ENCODE measurements at regions of chr1 and their contacts with region 1.

Region 1: DNA sequence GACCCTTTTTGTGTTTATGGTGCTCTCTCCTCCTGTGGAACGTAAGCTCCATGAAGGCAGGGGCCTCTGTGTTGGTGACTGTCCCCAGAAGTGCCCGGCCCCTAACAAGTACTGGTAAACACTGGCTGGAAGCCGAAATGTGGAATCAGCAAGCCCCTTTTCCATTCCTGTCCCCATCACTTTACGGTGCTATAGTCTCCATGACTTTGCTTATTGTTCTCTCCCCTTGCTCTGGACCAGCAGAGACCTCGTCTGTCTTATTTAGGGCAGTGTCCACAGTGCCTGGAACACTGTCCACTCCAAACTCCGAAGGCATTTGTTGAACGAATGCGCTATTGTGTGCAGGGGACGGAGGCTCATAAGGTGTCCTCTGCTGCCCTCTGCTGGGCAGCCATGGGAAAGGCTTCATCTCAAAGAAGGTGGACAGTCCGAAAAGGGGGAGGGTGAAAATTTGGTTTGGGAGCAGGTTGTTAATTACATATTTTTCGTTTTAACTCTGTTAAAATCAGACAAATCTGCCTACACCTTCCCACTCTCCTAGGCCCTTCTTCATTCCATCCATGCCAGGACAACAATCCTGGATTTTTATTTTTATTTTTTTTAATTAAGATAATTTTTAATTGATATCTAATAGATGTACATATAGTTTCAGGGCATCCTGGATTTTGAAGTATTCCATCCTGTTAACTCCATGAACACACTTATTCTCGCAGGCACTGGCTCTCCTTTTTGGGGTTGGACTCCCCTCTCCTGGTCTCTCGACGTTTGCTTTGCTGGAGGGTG is 115.6 kb downstream of the PGBD5 start:
- DNase-seq: peak; percentile 42 to 67
- ATAC-seq: peak; percentile 85 to 91
- H3K4me3 ChIP-seq: no peak overlapping the region
- H3K27ac ChIP-seq: peak overlapping the region in 1 of 4 donors; percentile 40
- H3K4me1 ChIP-seq: peaks cover 0 to 8% of the 10 kb centered on the region in 2 donors
- H3K27me3 ChIP-seq: no peaks in the 10 kb centered on the region
- CTCF ChIP-seq: peak; percentile 87 to 93 (median 92)
- POLR2A ChIP-seq: no peak

Region 2: DNA sequence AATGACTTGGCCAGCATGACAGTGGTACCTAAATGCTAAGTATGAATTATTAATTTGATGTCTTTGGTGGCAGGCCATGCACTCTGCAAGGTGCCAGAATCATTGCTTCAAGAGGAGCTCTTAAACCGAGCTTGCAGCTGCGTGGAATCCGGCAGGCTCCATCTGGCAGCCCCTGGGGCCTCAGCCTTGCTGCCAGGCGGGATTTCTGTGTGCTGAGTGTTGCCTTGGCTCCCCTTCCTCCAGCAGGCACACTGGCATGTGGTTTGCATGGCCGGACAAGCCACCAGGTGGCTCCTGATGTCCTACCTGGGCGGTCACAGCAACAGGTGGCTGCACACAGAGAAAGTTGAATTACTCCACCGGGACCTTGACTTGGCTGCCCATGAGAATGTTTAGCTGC is 529.1 kb before region 1 on chr1:
- in situ Hi-C with region 1: no loop called
- intact Hi-C with region 1: loop called (anchors 5 kb)
- DNase-seq: peak; percentile 12 to 47
- ATAC-seq: peak; percentile 30 to 60
- H3K4me3 ChIP-seq: no peak overlapping the region
- H3K27ac ChIP-seq: no peak overlapping the region
- H3K4me1 ChIP-seq: no peaks in the 10 kb centered on the region
- H3K27me3 ChIP-seq: no peaks in the 10 kb centered on the region
- CTCF ChIP-seq: peak in 2 of 5 experiments; percentile 36 to 40
- POLR2A ChIP-seq: no peak

Region 3: DNA sequence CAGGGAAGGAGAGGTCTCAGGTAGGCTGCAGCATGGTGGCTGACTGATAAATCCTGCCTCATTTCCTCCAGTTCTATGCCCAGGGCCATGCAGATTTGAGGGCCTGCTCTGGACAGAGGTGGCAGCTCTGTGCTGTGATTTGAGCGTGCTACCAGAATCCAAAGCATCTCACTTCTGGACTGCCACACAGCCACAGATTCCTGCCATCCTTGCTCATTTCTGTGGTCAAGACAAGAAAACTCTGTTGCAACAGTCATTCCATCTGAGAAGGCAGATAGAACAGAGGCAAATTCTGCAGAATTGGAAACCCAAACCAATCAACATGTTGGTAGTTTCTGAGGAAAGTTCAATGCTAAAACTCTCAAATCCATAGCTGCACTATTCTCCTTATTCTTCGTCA is 346.3 kb before region 1 on chr1:
- in situ Hi-C with region 1: no loop called
- intact Hi-C with region 1: loop called (anchors 10 kb)
- DNase-seq: no peak
- ATAC-seq: no peak
- H3K4me3 ChIP-seq: no peak overlapping the region
- H3K27ac ChIP-seq: no peak overlapping the region
- H3K4me1 ChIP-seq: no peaks in the 10 kb centered on the region
- H3K27me3 ChIP-seq: no peaks in the 10 kb centered on the region
- CTCF ChIP-seq: no peak
- POLR2A ChIP-seq: no peak